ENCODE measurements at regions of chr7 and their contacts with region 1.

Region 1: DNA sequence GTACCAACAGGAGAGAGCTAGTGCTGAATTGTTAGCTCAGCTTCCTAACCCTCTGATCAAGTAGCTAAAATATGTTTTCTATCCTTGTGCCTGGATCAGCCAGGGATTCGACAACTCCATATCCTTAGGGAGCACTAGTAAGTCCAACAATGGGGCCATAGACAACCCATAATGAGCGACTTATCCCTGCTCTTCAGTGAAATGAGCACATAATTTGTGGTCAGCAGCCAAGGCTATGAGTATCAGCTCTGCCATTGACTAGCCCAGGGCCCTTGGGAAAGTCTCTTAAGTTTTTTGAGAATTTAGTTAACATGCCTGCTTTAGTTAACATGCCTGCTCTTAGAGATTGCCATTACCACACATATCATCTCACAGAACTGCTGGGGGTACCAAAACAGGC is 39.3 kb downstream of the COL1A2 start:
- DNase-seq: no peak
- ATAC-seq: peak; percentile 12

Region 2: DNA sequence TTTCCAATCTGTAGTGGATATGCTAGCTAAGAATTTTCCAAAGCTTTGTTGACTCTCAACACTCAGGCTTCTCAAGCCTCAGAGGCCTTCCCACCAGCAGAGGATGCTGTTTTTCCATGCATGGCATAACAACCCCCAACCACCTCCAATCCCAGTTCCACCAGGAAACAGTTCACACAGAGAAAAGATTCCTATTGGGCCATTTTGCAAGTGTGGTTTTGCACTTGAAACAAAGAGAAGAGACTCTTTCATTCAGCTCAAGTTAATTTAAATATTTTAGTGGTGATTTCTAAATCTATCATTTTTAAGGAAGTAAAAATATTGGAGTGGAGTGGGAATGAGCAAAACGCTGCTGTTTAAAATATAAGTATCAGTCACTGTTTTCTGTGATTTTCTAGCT is 145.0 kb before region 1 on chr7:
- intact Hi-C with region 1: loop called (anchors 2 kb)
- DNase-seq: no peak
- ATAC-seq: peak; percentile 85

Region 3: DNA sequence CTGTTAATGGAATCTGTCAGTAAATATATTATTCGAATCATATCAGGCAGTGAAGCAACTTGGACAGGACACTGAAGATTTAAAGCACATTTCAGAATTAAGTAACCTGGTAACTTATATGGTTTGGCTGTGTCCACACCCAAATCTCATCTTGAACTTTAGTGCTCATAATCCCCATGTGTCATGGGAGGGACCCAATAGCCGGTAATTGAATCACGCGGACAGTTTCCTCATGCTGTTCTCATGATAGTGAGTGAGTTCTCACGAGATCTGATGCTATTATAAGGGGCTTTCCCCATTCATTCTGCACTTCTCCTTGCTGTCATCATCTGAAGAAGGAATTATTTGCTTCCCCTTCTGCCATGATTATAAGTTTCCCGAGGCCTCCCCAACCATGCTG is 122.5 kb before region 1 on chr7:
- intact Hi-C with region 1: no loop called
- DNase-seq: no peak
- ATAC-seq: no peak

Region 4: GRCh38 chr7:94324380-94325117 is 109.5 kb before region 1 on chr7:
- intact Hi-C with region 1: no loop called
- DNase-seq: no peak
- ATAC-seq: no peak